Gastrocnemius medialis (tissue), 4 donors: ENCODE measurements at regions of chr6 and their contacts with region 1.

Region 1: GRCh38 chr6:149028767-149029405 is 282.1 kb downstream of the UST start:
- DNase-seq: peak in 1 of 2 donors; percentile 40
- ATAC-seq: peak; percentile 64 to 84
- H3K4me3 ChIP-seq: no peak overlapping the region
- H3K27ac ChIP-seq: no peak overlapping the region
- H3K4me1 ChIP-seq: peaks cover 0 to 6% of the 10 kb centered on the region in 2 donors
- H3K27me3 ChIP-seq: no peaks in the 10 kb centered on the region
- CTCF ChIP-seq: peak; percentile 69 to 81 (median 71)
- POLR2A ChIP-seq: no peak

Region 2: GRCh38 chr6:149431905-149432775 is 403.3 kb after region 1 on chr6:
- in situ Hi-C with region 1: loop called (anchors 5 kb)
- intact Hi-C with region 1: loop called (anchors 1 kb)
- DNase-seq: peak; percentile 76 to 83
- ATAC-seq: peak; percentile 87 to 91
- H3K4me3 ChIP-seq: no peak overlapping the region
- H3K27ac ChIP-seq: no peak overlapping the region
- H3K4me1 ChIP-seq: peaks cover 0 to 2% of the 10 kb centered on the region in 2 donors
- H3K27me3 ChIP-seq: no peaks in the 10 kb centered on the region
- CTCF ChIP-seq: peak; percentile 92 to 97 (median 95)
- POLR2A ChIP-seq: no peak